CD8-positive, alpha-beta memory T cell (primary cell): ENCODE measurements at regions of chr9 and their contacts with region 1.

Region 1: GRCh38 chr9:79571309-79572031 is at the start of gene TLE4:
- DNase-seq: peak; percentile 98 to 100 (median 100)
- H3K4me3 ChIP-seq: peak within 1 kb of the TSS; percentile 79
- H3K4me3 Mint-ChIP-seq: peak within 1 kb of the TSS in 6 of 7 donors; percentile 74 to 97 (median 94)
- H3K27ac ChIP-seq: peak within 1 kb of the TSS; percentile 76
- H3K27ac Mint-ChIP-seq: peak within 1 kb of the TSS in 3 of 8 donors; percentile 36 to 82 (median 75)
- H3K4me1 ChIP-seq: peaks cover 29% of the 10 kb centered on the region
- H3K4me1 Mint-ChIP-seq: peaks cover 29 to 39% (median 37%) of the 10 kb centered on the region in 3 donors
- H3K27me3 ChIP-seq: no peaks in the 10 kb centered on the region
- H3K27me3 Mint-ChIP-seq: peaks cover 9 to 11% of the 10 kb centered on the region in 2 donors
- total RNA-seq, gene TLE4: 28.1 to 29.2 TPM

Region 2: DNA sequence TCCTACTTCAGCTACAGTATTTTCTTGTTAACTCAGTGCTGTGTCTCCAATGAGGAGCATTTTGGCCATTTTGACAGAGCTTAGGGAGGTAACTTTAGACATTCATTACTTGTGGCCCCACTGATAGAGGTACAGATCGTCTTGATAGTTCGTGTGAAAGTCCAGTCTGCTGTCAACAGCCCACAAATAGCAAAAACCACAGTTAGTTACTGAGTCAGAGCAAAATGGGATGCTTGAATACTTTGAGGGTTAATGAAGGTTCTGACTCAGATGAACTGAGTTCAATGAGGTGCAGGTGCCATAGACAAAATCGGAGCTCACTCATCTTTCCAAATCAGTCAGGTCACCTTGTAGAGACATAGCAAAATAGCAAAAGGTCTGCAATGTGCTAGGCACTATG is 162.9 kb before region 1 on chr9:
- CTCF ChIA-PET with region 1: no interaction called
- POLR2A ChIA-PET with region 1: no interaction called
- DNase-seq: no peak
- H3K4me3 ChIP-seq: no peak overlapping the region
- H3K4me3 Mint-ChIP-seq: no peak overlapping the region
- H3K27ac ChIP-seq: no peak overlapping the region
- H3K27ac Mint-ChIP-seq: no peak overlapping the region
- H3K4me1 ChIP-seq: no peaks in the 10 kb centered on the region
- H3K4me1 Mint-ChIP-seq: no peaks in the 10 kb centered on the region
- H3K27me3 ChIP-seq: no peaks in the 10 kb centered on the region
- H3K27me3 Mint-ChIP-seq: peaks cover 2 to 3% of the 10 kb centered on the region in 2 donors

Region 3: DNA sequence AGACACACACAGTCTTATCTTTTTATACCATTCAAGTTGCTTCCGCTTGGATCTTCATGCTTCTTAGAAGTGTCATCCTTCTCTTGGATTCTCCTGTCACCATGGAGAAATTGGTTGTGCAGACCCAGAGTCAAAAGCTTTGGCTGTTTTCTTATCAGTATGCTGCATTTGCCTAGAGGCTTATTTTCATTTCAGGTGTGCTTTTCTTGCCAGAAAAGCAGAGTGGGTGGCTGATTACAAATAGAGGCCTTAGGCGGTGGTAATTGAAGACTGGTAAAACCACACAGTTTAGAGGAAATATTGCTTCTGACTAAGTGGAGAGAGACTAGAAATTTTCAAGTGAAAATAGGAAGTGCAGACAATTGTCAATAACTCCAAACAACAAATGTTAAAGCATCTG is 69.9 kb before region 1 on chr9:
- CTCF ChIA-PET with region 1: no interaction called
- POLR2A ChIA-PET with region 1: no interaction called
- DNase-seq: no peak
- H3K4me3 ChIP-seq: no peak overlapping the region
- H3K4me3 Mint-ChIP-seq: no peak overlapping the region
- H3K27ac ChIP-seq: no peak overlapping the region
- H3K27ac Mint-ChIP-seq: no peak overlapping the region
- H3K4me1 ChIP-seq: no peaks in the 10 kb centered on the region
- H3K4me1 Mint-ChIP-seq: no peaks in the 10 kb centered on the region
- H3K27me3 ChIP-seq: no peaks in the 10 kb centered on the region
- H3K27me3 Mint-ChIP-seq: peaks cover 0 to 9% of the 10 kb centered on the region in 2 donors

Region 4: DNA sequence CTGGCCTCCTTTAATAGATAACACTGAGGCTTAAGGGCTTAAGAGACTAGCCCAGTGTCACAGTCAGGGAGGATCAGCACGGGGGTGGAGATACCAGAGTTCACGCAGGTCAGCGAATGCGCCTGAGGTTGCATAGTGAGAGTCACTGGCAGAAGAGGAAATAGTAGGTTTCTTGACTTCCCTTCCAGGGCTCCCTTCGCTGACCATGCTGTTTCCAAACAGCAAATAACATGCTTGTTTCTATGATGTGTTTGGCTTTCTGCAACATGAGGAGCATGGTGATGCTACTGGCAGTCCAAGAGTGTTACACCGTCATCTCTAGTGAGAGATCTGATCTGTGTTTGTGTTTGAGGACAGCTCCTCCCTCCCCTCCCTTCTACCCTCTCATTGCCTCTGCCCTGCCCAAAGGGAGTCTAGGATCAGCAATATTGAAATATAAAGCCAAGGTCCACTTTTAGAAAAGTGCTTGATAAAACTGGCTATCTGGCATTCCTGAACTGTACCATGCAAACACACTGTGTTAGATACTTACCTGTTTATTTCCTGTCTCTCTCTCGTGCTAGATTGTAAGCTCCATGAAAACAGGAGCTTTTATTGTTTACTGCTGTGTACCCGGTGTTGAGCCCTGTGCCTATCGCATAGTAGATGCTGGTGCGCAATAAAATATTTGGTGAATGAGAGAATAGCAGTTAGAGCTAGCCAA is 12.6 kb after region 1 on chr9:
- CTCF ChIA-PET with region 1: interaction called, 5 read pairs
- POLR2A ChIA-PET with region 1: interaction called, 22 read pairs
- DNase-seq: peak in 1 of 5 donors; percentile 23
- H3K4me3 ChIP-seq: no peak overlapping the region
- H3K4me3 Mint-ChIP-seq: peak overlapping the region in 6 of 7 donors; percentile 23 to 66 (median 61)
- H3K27ac ChIP-seq: no peak overlapping the region
- H3K27ac Mint-ChIP-seq: peak overlapping the region in 7 of 8 donors; percentile 29 to 66 (median 53)
- H3K4me1 ChIP-seq: peaks cover 53% of the 10 kb centered on the region
- H3K4me1 Mint-ChIP-seq: peaks cover 71 to 91% (median 89%) of the 10 kb centered on the region in 3 donors
- H3K27me3 ChIP-seq: no peaks in the 10 kb centered on the region
- H3K27me3 Mint-ChIP-seq: no peaks in the 10 kb centered on the region

Region 5: GRCh38 chr9:79623799-79624721 is 52.6 kb after region 1 on chr9:
- CTCF ChIA-PET with region 1: interaction called, 4 read pairs
- POLR2A ChIA-PET with region 1: interaction called, 33 read pairs
- DNase-seq: peak; percentile 11 to 73 (median 26)
- H3K4me3 ChIP-seq: no peak overlapping the region
- H3K4me3 Mint-ChIP-seq: peak overlapping the region; percentile 53 to 84 (median 74)
- H3K27ac ChIP-seq: peak overlapping the region; percentile 19
- H3K27ac Mint-ChIP-seq: peak overlapping the region; percentile 29 to 91 (median 82)
- H3K4me1 ChIP-seq: peaks cover 30% of the 10 kb centered on the region
- H3K4me1 Mint-ChIP-seq: peaks cover 65 to 86% (median 76%) of the 10 kb centered on the region in 3 donors
- H3K27me3 ChIP-seq: no peaks in the 10 kb centered on the region
- H3K27me3 Mint-ChIP-seq: no peaks in the 10 kb centered on the region